HepG2 (cell line): ENCODE measurements at regions of chr19 and their contacts with region 1.

Region 1: GRCh38 chr19:24062190-24062589 is 24.8 kb upstream of the ZNF254 start:
- DNase-seq: no peak
- ATAC-seq: no peak
- H3K4me3 ChIP-seq: no peak overlapping the region
- H3K27ac ChIP-seq: no peak overlapping the region
- H3K4me1 ChIP-seq: peaks cover 17% of the 10 kb centered on the region
- H3K27me3 ChIP-seq: no peaks in the 10 kb centered on the region
- CTCF ChIP-seq: no peak
- EP300 ChIP-seq: no peak
- POLR2A ChIP-seq: no peak
- RAD21 ChIP-seq: no peak

Region 2: DNA sequence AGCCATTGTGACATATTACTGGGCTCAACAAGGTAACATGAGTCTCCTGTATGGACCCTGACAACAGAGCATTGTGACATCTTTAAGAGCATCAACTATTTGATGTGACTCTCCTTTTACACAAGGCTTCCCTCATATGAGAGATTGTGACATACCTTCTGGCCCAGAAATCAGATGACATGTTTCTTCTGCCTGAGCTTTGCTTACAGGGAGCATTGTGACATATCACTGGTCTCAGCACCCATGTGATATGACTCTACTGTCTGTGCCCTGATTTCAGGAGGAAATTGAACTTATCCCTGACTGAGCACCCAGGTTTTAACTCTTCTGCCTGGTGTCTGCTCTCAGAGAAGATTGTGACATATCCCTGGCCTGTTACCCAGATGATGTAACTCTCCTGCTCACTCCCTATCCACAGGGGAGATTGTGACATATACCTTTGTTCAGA is 287.6 kb before region 1 on chr19:
- CTCF ChIA-PET with region 1: no interaction called
- POLR2A ChIA-PET with region 1: no interaction called
- in situ Hi-C with region 1: loop called (anchors 5 kb)
- intact Hi-C with region 1: no loop called
- DNase-seq: no peak
- ATAC-seq: no peak
- H3K4me3 ChIP-seq: no peak overlapping the region
- H3K27ac ChIP-seq: no peak overlapping the region
- H3K4me1 ChIP-seq: no peaks in the 10 kb centered on the region
- H3K27me3 ChIP-seq: no peaks in the 10 kb centered on the region
- CTCF ChIP-seq: no peak
- EP300 ChIP-seq: no peak
- POLR2A ChIP-seq: no peak
- RAD21 ChIP-seq: no peak

Region 3: DNA sequence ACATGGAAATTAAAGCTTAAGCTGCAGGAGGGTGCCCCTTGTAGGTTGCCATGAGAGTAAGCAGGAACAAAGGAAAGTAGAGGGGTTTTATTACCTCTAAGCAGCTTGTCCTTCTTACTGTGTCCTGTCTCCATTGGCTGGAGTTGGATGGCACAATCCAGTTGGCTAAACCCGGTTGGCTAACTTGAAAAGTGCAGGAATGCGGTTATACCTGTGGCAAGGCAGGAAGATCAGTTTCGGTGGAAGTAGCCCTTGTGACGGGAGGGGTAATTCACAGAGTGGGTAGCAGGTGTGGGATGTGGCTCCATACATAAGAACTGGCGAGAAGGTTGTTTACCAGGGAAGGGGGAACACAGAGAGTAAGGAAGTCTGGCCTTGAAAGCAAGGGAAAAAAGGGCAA is 144.3 kb before region 1 on chr19:
- CTCF ChIA-PET with region 1: no interaction called
- POLR2A ChIA-PET with region 1: no interaction called
- in situ Hi-C with region 1: no loop called
- intact Hi-C with region 1: no loop called
- DNase-seq: no peak
- ATAC-seq: no peak
- H3K4me3 ChIP-seq: no peak overlapping the region
- H3K27ac ChIP-seq: no peak overlapping the region
- H3K4me1 ChIP-seq: no peaks in the 10 kb centered on the region
- H3K27me3 ChIP-seq: no peaks in the 10 kb centered on the region
- CTCF ChIP-seq: no peak
- EP300 ChIP-seq: no peak
- POLR2A ChIP-seq: no peak
- RAD21 ChIP-seq: no peak

Region 4: GRCh38 chr19:23932878-23933277 is 129.3 kb before region 1 on chr19:
- CTCF ChIA-PET with region 1: no interaction called
- POLR2A ChIA-PET with region 1: no interaction called
- in situ Hi-C with region 1: no loop called
- intact Hi-C with region 1: no loop called
- DNase-seq: no peak
- ATAC-seq: no peak
- H3K4me3 ChIP-seq: no peak overlapping the region
- H3K27ac ChIP-seq: no peak overlapping the region
- H3K4me1 ChIP-seq: no peaks in the 10 kb centered on the region
- H3K27me3 ChIP-seq: no peaks in the 10 kb centered on the region
- CTCF ChIP-seq: no peak
- EP300 ChIP-seq: no peak
- POLR2A ChIP-seq: no peak
- RAD21 ChIP-seq: no peak

Region 5: GRCh38 chr19:24040621-24041020 is 21.6 kb before region 1 on chr19:
- CTCF ChIA-PET with region 1: no interaction called
- POLR2A ChIA-PET with region 1: no interaction called
- in situ Hi-C with region 1: no loop called
- intact Hi-C with region 1: no loop called
- DNase-seq: no peak
- ATAC-seq: no peak
- H3K4me3 ChIP-seq: no peak overlapping the region
- H3K27ac ChIP-seq: no peak overlapping the region
- H3K4me1 ChIP-seq: peaks cover 20% of the 10 kb centered on the region
- H3K27me3 ChIP-seq: no peaks in the 10 kb centered on the region
- CTCF ChIP-seq: no peak
- EP300 ChIP-seq: no peak
- POLR2A ChIP-seq: no peak
- RAD21 ChIP-seq: no peak

Region 6: GRCh38 chr19:24140099-24140498 is 77.9 kb after region 1 on chr19:
- CTCF ChIA-PET with region 1: no interaction called
- POLR2A ChIA-PET with region 1: no interaction called
- in situ Hi-C with region 1: no loop called
- intact Hi-C with region 1: loop called (anchors 2 kb)
- DNase-seq: peak; percentile 92
- ATAC-seq: peak; percentile 79
- H3K4me3 ChIP-seq: no peak overlapping the region
- H3K27ac ChIP-seq: no peak overlapping the region
- H3K4me1 ChIP-seq: peaks cover 18% of the 10 kb centered on the region
- H3K27me3 ChIP-seq: no peaks in the 10 kb centered on the region
- CTCF ChIP-seq: no peak
- EP300 ChIP-seq: peak in 1 of 2 experiments; percentile 74; a peak in 2 of 4 replicates
- POLR2A ChIP-seq: no peak
- RAD21 ChIP-seq: no peak

Region 7: GRCh38 chr19:24159707-24160106 is 97.5 kb after region 1 on chr19:
- CTCF ChIA-PET with region 1: no interaction called
- POLR2A ChIA-PET with region 1: no interaction called
- in situ Hi-C with region 1: no loop called
- intact Hi-C with region 1: no loop called
- DNase-seq: peak; percentile 29
- ATAC-seq: no peak
- H3K4me3 ChIP-seq: no peak overlapping the region
- H3K27ac ChIP-seq: no peak overlapping the region
- H3K4me1 ChIP-seq: no peaks in the 10 kb centered on the region
- H3K27me3 ChIP-seq: no peaks in the 10 kb centered on the region
- CTCF ChIP-seq: peak; percentile 47
- EP300 ChIP-seq: no peak
- POLR2A ChIP-seq: no peak
- RAD21 ChIP-seq: no peak